Heart left ventricle (tissue), 16 donors: ENCODE measurements at regions of chr1 and their contacts with region 1.

Region 1: GRCh38 chr1:209207701-209208286 is 375.7 kb upstream of the CAMK1G start:
- DNase-seq: peak; percentile 59 to 79 (median 63)
- ATAC-seq: peak; percentile 74 to 99 (median 92)
- H3K4me3 ChIP-seq: peak overlapping the region in 10 of 12 donors; percentile 4 to 53 (median 38)
- H3K27ac ChIP-seq: peak overlapping the region in 4 of 12 donors; percentile 6 to 22 (median 19)
- H3K4me1 ChIP-seq: peaks cover 0 to 16% (median 11%) of the 10 kb centered on the region in 12 donors
- H3K27me3 ChIP-seq: peaks cover 0 to 47% (median 25%) of the 10 kb centered on the region in 9 donors
- CTCF ChIP-seq: peak; percentile 39 to 90 (median 71)
- POLR2A ChIP-seq: no peak

Region 2: DNA sequence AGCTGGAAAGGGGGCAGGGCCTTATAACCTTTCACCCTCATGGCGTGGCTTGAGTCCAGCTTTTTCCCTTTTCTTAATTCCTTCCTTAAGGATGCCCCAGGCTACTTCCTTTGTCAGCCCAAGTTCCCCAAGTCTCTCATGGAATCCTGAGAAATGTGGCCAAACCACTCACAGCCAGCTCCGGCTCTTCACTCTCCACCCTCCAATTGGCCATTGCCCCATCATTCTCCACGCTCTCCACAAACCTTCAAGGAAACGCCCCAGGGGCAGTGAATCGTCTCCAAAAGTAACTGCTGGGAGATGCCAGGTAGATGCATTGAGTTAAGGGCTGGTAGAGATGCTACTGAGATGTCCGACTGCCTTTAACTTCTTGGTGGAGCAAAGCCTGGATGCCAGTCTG is 1183.4 kb before region 1 on chr1:
- intact Hi-C with region 1: loop called in 1 of 10 experiments (anchors 5 kb)
- DNase-seq: no peak
- ATAC-seq: no peak
- H3K4me3 ChIP-seq: no peak overlapping the region
- H3K27ac ChIP-seq: no peak overlapping the region
- H3K4me1 ChIP-seq: peaks cover 0 to 48% (median 5%) of the 10 kb centered on the region in 12 donors
- H3K27me3 ChIP-seq: no peaks in the 10 kb centered on the region
- CTCF ChIP-seq: no peak
- POLR2A ChIP-seq: no peak

Region 3: DNA sequence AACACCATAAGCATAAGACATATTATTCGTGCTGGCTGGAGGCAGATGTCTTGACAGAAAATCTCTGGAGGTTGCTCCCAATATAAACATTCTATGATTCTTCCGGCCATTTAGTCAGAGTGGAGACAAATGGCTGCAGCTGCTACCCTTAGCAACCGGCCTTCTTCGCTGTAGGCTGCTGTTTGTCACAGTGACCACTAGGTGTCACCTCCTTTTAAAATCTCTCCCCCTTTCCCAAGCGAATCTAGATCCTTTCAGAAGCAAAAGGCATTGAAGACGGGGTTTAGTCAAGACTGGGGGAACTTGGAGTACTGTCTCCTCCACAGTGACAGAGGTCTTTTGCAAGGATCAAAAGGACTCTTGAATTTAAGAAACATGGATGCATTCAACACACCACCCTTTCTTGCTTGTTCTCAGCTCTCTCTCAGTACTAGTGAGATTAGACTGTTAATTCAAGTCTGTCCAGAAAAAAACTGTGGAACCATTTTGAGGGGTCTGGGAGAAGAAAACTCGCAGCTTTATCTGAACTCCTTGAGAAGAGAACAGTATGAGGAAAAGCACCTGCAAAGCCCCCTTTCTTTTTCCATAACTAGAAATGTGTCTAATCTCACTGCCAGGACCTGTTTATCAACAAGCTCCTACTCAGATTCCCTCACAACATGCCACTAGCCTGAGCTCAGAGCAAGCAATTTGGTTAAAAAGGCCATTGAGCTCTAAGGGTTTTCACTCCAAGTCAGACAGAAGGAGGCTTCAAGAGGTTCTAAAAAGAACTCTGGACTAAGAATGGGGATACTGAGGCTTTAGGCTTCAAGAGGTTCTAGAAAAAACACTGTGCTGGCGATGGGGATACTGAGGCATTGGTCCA is 555.3 kb before region 1 on chr1:
- intact Hi-C with region 1: loop called in 9 of 10 experiments (anchors 5 to 10 kb)
- DNase-seq: peak in 4 of 5 donors; percentile 28 to 46 (median 36)
- ATAC-seq: peak in 3 of 4 donors; percentile 80 to 93 (median 82)
- H3K4me3 ChIP-seq: no peak overlapping the region
- H3K27ac ChIP-seq: no peak overlapping the region
- H3K4me1 ChIP-seq: peaks cover 0 to 12% (median 0%) of the 10 kb centered on the region in 12 donors
- H3K27me3 ChIP-seq: peaks cover 0 to 17% (median 0%) of the 10 kb centered on the region in 9 donors
- CTCF ChIP-seq: peak; percentile 73 to 91 (median 86)
- POLR2A ChIP-seq: no peak

Region 4: DNA sequence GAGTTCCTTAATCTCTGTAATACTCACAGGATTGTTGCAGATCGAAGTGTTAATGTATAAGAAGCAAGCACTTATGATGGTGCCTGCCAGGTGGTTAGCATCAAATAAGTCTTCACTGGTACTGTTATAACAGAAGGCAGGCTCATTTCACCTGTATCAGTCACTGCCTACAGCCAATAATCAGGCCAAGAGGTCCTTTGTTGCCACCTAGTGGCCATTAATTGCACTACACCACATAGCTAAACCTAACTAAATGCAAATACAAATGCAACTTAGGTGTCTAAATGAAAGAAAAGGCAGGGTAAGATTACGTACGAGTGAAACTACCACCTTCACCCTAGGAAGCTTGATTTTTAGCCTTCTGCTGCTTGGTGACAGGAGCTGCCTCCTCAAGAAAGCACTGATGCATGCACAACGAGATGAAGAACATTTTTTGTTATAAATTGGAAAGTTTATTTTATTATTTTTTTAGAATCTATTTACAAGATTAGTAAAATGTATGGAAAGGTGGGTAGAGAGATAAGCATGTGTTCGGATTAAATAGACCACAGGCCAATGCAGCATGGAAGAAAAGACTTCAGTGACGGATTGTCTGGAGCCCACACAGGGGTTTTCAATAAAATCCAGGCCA is 41.0 kb after region 1 on chr1:
- intact Hi-C with region 1: loop called in 2 of 10 experiments (anchors 5 kb)
- DNase-seq: peak in 1 of 5 donors; percentile 34
- ATAC-seq: peak in 3 of 4 donors; percentile 54 to 61 (median 55)
- H3K4me3 ChIP-seq: no peak overlapping the region
- H3K27ac ChIP-seq: no peak overlapping the region
- H3K4me1 ChIP-seq: no peaks in the 10 kb centered on the region
- H3K27me3 ChIP-seq: peaks cover 0 to 8% (median 0%) of the 10 kb centered on the region in 9 donors
- CTCF ChIP-seq: peak; percentile 83 to 98 (median 93)
- POLR2A ChIP-seq: no peak

Region 5: GRCh38 chr1:209354111-209354839 is 146.5 kb after region 1 on chr1:
- intact Hi-C with region 1: loop called in 6 of 10 experiments (anchors 5 to 10 kb)
- DNase-seq: peak; percentile 54 to 80 (median 71)
- ATAC-seq: peak; percentile 78 to 92 (median 90)
- H3K4me3 ChIP-seq: no peak overlapping the region
- H3K27ac ChIP-seq: no peak overlapping the region
- H3K4me1 ChIP-seq: peaks cover 0 to 10% (median 4%) of the 10 kb centered on the region in 12 donors
- H3K27me3 ChIP-seq: no peaks in the 10 kb centered on the region
- CTCF ChIP-seq: peak; percentile 67 to 88 (median 82)
- POLR2A ChIP-seq: no peak

Region 6: DNA sequence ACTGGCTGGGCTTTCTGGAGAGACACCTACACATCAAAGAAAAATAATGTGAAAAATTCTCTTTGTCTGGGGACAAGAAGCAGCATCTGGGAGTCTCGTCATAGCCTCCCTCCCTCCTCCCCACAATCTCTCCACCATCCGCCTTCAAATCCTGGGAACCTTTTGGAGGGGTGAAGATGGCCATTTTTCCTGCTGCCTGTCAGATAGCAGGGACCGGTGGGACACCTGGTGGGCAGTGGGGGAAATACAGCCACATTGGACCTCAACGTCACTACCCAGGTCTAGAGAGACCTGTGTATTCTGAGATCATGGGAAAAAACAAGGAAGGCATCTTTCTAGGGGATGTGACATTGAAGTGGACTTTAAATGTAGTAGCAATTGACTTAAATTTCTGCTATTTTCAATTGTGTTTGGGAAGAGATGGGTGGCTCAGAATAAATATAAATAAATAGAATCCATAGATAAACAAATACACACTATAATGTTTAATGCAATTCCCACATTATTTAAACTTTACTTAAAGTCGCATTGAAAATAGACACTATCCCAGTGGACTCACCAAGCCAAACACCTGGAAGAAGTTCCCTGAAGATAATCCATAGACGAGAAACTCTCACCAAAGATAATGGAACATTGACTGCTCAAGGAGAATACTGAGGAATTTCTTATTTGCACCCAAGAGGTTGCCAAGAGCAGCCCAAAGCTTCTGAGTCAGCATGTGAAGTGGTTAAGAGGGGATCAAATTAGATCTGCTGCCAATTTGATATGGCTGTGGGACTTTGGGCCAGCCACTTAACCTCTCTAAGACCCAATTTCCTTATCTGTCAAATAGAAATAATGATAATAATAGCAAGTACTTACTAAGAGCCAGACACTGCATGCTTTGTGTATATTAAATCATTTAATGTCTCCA is 228.1 kb after region 1 on chr1:
- intact Hi-C with region 1: loop called in 1 of 10 experiments (anchors 5 kb)
- DNase-seq: peak; percentile 46 to 74 (median 53)
- ATAC-seq: peak in 3 of 4 donors; percentile 58 to 71 (median 65)
- H3K4me3 ChIP-seq: no peak overlapping the region
- H3K27ac ChIP-seq: no peak overlapping the region
- H3K4me1 ChIP-seq: no peaks in the 10 kb centered on the region
- H3K27me3 ChIP-seq: peaks cover 0 to 3% (median 0%) of the 10 kb centered on the region in 9 donors
- CTCF ChIP-seq: peak; percentile 49 to 77 (median 68)
- POLR2A ChIP-seq: no peak